ENCODE measurements at regions of chr1 and their contacts with region 1.

Region 1: DNA sequence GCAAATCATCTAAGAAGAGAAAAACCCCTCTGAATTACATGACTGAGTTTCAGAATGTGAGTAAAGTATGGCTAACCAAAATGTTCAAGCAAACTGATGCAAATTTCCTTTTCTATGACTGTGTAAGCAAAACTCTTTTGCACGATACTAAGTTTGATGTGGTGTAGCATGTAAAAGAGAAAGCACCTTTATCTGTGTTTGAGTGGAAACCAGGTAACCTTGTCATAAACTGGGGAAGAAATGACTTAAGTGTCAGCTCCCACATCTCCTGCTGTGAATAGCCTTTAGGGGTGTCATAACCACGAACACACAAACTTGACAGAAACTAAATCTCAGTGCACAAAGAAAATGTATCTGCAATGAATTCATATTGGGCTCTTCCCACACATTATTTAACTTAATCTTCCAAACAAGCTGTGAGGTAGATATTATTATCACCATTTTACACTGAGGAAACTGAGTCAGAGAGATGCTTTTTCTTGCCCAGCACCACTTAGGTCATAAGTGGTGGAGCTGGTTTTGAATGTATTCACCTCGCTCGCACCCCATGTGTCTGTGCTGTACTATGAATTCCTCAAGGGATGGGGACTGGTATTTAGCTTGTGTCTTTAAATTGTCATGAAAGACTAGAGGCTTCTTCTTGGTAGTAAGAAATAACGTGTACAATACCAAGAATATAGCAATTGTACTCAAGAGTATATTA is 32.9 kb upstream of the IL12RB2 start:
- DNase-seq: peak; percentile 85
- H3K4me3 Mint-ChIP-seq: no peak overlapping the region
- H3K27ac Mint-ChIP-seq: peak overlapping the region; percentile 76
- H3K4me1 Mint-ChIP-seq: peaks cover 43% of the 10 kb centered on the region
- H3K27me3 Mint-ChIP-seq: no peaks in the 10 kb centered on the region

Region 2: DNA sequence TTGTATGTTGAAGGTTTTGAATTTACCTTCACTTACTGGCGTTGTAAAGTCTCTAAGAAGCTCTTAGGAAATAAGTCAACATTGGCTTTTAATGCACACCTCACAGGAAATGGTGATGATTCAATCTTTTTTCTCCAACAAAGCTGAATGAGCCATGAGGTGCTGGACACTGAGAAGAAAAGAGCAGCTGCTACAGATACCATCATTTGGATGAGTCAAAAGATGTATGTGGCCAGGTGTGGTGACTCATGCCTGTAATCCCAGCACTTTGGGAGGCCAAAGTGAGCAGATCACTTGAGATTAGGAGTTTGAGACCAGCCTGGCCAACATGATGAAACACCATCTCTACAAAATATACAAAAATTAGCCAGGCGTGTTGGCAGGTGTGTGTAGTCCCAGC is 111.8 kb before region 1 on chr1:
- intact Hi-C with region 1: loop called (anchors 1 kb)
- DNase-seq: peak; percentile 83
- H3K4me3 Mint-ChIP-seq: peak overlapping the region; percentile 39
- H3K27ac Mint-ChIP-seq: peak overlapping the region; percentile 89
- H3K4me1 Mint-ChIP-seq: peaks cover 39% of the 10 kb centered on the region
- H3K27me3 Mint-ChIP-seq: no peaks in the 10 kb centered on the region

Region 3: DNA sequence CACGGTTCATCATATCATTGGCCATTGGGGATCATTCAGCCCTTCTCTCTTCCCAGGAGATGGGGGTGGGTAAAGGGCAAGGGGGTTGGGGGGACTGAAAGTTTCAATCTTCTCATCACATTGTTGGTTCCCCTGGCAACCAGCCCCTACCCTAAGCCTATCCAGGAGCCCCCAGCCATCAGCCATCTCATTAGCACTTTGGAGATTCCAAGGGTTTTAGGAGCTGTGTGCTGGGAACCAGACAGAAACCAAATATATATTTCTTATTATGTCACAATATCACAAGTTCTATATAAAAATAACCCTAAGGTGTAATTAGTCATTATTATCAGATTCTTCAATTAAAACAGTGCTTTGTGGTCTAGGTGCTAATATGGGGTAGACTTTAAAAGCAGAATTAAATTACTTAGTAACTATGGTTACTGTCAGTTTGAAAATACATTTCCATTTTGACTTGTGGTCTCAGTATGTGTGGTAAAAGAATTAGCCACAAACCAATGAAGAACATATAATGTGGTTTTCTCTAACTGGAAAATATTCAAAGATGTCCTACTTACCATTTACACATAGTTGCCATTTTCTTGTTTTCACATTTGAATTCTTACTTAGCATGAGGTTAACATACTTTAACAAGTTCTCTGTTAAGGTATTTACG is 80.4 kb before region 1 on chr1:
- intact Hi-C with region 1: loop called (anchors 1 kb)
- DNase-seq: peak; percentile 66
- H3K4me3 Mint-ChIP-seq: no peak overlapping the region
- H3K27ac Mint-ChIP-seq: peak overlapping the region; percentile 86
- H3K4me1 Mint-ChIP-seq: peaks cover 8% of the 10 kb centered on the region
- H3K27me3 Mint-ChIP-seq: no peaks in the 10 kb centered on the region

Region 4: DNA sequence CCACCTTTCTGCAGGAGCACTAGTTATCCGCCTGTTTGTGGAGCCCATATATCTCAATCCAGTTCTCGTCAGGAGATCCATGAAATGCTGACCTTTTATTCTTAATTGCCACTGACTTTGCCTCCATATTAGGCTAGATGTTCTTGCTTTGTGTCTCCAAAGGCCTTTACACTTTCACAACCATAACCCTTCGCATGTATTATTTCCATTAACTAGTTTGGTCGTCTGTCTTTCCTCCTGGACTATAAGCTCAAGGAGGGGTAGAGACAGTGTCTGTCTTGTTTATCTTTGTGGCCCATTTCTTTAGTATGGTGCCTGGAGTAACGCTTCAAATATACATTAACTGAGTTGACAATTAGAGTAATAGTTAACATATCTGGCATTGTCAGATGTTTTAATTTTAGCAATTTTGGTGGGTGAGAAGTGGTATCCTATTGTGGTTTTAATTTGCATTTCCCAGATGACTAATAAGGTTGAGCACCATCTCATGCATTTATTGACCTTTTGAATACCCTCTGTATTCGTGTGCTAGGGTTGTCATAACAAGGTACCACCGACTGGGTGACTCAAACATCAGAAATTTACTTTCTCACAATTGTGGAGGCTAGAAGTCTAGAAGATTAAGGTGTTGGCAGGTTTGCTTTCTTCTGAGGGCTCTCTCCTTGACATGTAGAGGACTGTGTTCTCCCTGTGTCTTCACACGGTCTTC is 11.2 kb after region 1 on chr1:
- intact Hi-C with region 1: loop called (anchors 1 kb)
- DNase-seq: no peak
- H3K4me3 Mint-ChIP-seq: peak overlapping the region; percentile 4
- H3K27ac Mint-ChIP-seq: peak overlapping the region; percentile 80
- H3K4me1 Mint-ChIP-seq: peaks cover 33% of the 10 kb centered on the region
- H3K27me3 Mint-ChIP-seq: no peaks in the 10 kb centered on the region

Region 5: DNA sequence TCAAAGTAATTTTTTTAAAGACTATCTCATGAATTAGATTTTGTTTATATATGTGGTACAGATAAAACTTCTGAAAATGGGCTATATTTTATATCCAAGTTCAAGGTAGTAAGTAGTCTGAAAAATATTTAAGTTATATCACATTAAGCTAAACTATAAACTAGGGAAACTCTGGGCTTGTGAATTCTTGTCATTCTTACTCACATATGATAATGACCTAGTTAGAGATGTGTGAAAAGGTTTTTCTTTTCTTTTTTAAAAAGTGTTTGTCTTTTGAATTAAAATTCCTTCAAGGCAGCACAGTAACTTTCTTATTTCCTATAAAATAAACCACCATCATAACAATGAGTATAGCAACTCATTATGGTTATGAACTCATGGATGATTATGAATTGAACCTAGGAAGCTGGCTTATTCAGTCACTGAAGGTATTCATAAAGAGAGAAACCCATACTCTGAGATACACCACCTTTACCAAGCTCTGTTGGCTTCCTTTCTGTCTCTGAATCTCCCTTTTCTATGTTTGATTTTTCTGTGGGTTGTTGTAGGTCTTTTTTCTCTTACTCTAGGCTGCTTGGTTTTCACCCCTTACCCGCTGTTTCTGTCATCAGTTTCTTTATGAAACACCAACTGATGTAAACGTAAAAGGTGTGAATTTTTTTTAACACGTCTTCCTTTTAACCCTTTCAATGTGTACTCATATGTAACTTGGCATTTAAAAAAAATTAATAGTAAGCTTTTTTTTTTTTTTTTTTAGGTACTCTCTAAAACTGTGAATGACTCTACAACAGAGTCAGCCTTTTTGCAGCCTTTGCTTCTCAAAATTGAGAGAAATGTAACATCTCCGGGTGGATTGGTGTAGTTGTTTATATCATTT is 58.1 kb after region 1 on chr1:
- intact Hi-C with region 1: loop called (anchors 1 kb)
- DNase-seq: peak; percentile 86
- H3K4me3 Mint-ChIP-seq: peak overlapping the region; percentile 74
- H3K27ac Mint-ChIP-seq: peak overlapping the region; percentile 85
- H3K4me1 Mint-ChIP-seq: peaks cover 73% of the 10 kb centered on the region
- H3K27me3 Mint-ChIP-seq: no peaks in the 10 kb centered on the region

Region 6: DNA sequence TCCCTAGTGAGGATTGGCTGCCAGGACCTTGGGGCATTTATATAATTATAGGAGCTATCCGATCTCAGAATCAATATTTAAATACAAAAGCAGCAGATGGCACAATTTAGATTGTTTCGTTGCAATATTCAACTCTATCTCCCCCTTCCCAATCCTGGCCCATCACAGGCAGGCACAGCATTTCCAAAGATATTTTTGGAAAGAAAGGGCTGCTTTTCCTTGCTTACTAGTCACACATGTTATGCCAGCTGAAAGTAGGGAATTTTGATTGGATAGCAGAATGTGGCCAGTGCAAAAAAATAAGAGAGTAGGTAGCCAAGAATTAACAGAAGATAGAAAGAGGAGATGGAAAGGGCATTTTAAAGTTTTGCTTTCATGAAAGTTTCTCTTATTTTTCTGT is 70.8 kb after region 1 on chr1:
- intact Hi-C with region 1: no loop called
- DNase-seq: no peak
- H3K4me3 Mint-ChIP-seq: no peak overlapping the region
- H3K27ac Mint-ChIP-seq: peak overlapping the region; percentile 30
- H3K4me1 Mint-ChIP-seq: peaks cover 44% of the 10 kb centered on the region
- H3K27me3 Mint-ChIP-seq: no peaks in the 10 kb centered on the region

Measured in activated CD4-positive, alpha-beta T cell treated with anti-CD3 and anti-CD28 coated beads, Interleukin-2, amount 10 ng/mL, durations not matched to agents 24 days and 14 days (primary cell).